Lower leg skin (tissue), 4 donors: ENCODE measurements at regions of chr17 and their contacts with region 1.

Region 1: GRCh38 chr17:34199932-34200534 is 55.1 kb upstream of the CCL2 start:
- DNase-seq: peak; percentile 86 to 94
- H3K4me3 ChIP-seq: no peak overlapping the region
- CTCF ChIP-seq: peak in 2 of 3 donors; percentile 99 to 100
- POLR2A ChIP-seq: no peak

Region 2: DNA sequence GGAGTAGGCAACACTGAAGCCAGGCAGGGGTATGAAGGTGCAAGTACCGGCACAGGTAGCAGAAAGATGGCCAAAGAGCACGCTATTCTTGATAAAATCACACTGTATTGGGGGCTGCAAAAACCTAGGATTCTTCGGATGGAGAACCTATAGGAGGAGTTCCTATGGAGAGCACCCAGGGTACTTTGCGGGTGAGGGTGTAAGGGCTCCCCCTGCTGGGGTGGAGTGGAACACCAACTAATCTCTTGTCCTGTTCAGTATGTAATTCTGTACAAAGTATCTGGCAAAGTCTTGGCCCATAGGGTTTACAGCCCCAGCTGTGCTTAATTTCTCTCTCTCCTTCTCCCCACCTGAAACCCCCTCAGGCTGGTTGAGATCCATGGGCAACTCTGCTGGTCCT is 513.9 kb before region 1 on chr17:
- intact Hi-C with region 1: no loop called
- DNase-seq: peak in 1 of 2 donors; percentile 67
- H3K4me3 ChIP-seq: no peak overlapping the region
- CTCF ChIP-seq: no peak
- POLR2A ChIP-seq: no peak

Region 3: GRCh38 chr17:34361478-34362061 is 161.5 kb after region 1 on chr17:
- intact Hi-C with region 1: loop called (anchors 2 kb)
- DNase-seq: peak; percentile 90 to 97
- H3K4me3 ChIP-seq: no peak overlapping the region
- CTCF ChIP-seq: peak in 2 of 3 donors; percentile 18 to 98
- POLR2A ChIP-seq: no peak